ENCODE measurements at regions of chr12 and their contacts with region 1.

Region 1: GRCh38 chr12:62581288-62582064 is 114.8 kb downstream of the MON2 start:
- DNase-seq: peak; percentile 25
- H3K4me3 ChIP-seq: no peak overlapping the region
- H3K27ac ChIP-seq: no peak overlapping the region
- H3K4me1 ChIP-seq: no peaks in the 10 kb centered on the region
- H3K27me3 ChIP-seq: no peaks in the 10 kb centered on the region
- CTCF ChIP-seq: peak; percentile 46 to 65

Region 2: DNA sequence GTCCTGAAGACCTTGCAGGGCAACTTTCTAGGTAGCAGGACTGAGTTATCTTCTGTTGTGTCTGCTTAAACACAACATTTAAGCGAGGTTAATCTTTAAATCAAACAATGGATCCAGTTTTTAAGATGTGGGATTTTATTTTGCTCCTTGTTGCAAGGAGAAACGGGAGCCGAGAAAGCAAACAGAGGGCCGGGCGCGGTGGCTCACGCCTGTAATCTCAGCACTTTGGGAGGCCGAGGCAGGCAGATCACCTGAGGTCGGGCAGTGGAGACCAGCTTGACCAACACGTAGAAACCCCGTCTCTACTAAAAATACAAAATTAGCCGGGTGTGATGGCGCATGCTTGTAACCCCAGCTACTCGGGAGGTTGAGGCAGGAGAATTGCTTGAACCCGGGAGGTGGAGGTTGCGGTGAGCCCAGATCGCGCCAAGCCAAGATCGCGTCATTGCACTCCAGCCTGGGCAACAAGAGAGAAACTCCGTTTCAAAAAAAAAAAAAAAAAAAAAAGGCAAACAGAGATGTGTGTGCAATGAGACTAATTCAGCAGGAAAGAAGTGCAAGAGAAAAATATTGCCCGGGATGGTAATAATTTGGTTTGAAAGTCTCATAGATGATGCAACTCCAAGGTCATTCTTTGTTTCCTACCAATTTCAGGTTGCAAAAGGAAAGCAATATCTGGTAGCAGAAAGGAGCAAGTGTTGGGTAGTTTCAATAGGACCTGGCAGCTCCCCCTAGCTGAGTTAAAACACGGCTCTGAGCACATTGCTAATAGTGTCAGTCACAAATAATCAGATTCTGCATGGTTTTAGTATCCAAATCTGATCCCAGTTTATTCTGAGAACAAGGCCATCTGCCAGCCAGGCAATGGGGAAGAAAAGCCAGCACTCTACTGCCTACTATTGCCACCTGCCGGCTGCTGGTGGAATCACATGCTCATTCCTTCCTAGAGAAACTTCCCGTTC is 212.1 kb after region 1 on chr12:
- CTCF ChIA-PET with region 1: interaction called, 4 read pairs
- dilution Hi-C with region 1: no loop called
- in situ Hi-C with region 1: loop called in 1 of 2 experiments (anchors 5 kb)
- intact Hi-C with region 1: loop called (anchors 1 kb)
- DNase-seq: peak; percentile 67
- H3K4me3 ChIP-seq: no peak overlapping the region
- H3K27ac ChIP-seq: no peak overlapping the region
- H3K4me1 ChIP-seq: peaks cover 5% of the 10 kb centered on the region
- H3K27me3 ChIP-seq: no peaks in the 10 kb centered on the region
- CTCF ChIP-seq: peak; percentile 95 to 96

Region 3: GRCh38 chr12:62799126-62799736 is 217.8 kb after region 1 on chr12:
- CTCF ChIA-PET with region 1: interaction called, 7 read pairs
- dilution Hi-C with region 1: no loop called
- in situ Hi-C with region 1: loop called in 1 of 2 experiments (anchors 5 kb)
- intact Hi-C with region 1: loop called (anchors 1 kb)
- DNase-seq: peak; percentile 36
- H3K4me3 ChIP-seq: no peak overlapping the region
- H3K27ac ChIP-seq: no peak overlapping the region
- H3K4me1 ChIP-seq: peaks cover 7% of the 10 kb centered on the region
- H3K27me3 ChIP-seq: no peaks in the 10 kb centered on the region
- CTCF ChIP-seq: peak; percentile 95 to 97